Psoas muscle (tissue), 8 donors: ENCODE measurements at regions of chr17 and their contacts with region 1.

Region 1: GRCh38 chr17:47802341-47803022 is 19.1 kb downstream of the OSBPL7 start:
- DNase-seq: no peak
- ATAC-seq: peak; percentile 56 to 64 (median 62)
- H3K4me3 ChIP-seq: no peak overlapping the region
- H3K27ac ChIP-seq: no peak overlapping the region
- H3K4me1 ChIP-seq: peaks cover 16% of the 10 kb centered on the region
- H3K27me3 ChIP-seq: no peaks in the 10 kb centered on the region
- CTCF ChIP-seq: peak; percentile 59

Region 2: GRCh38 chr17:47368262-47368661 is 434.2 kb before region 1 on chr17:
- intact Hi-C with region 1: no loop called
- DNase-seq: no peak
- ATAC-seq: no peak
- H3K4me3 ChIP-seq: no peak overlapping the region
- H3K27ac ChIP-seq: no peak overlapping the region
- H3K4me1 ChIP-seq: no peaks in the 10 kb centered on the region
- H3K27me3 ChIP-seq: no peaks in the 10 kb centered on the region
- CTCF ChIP-seq: no peak

Region 3: DNA sequence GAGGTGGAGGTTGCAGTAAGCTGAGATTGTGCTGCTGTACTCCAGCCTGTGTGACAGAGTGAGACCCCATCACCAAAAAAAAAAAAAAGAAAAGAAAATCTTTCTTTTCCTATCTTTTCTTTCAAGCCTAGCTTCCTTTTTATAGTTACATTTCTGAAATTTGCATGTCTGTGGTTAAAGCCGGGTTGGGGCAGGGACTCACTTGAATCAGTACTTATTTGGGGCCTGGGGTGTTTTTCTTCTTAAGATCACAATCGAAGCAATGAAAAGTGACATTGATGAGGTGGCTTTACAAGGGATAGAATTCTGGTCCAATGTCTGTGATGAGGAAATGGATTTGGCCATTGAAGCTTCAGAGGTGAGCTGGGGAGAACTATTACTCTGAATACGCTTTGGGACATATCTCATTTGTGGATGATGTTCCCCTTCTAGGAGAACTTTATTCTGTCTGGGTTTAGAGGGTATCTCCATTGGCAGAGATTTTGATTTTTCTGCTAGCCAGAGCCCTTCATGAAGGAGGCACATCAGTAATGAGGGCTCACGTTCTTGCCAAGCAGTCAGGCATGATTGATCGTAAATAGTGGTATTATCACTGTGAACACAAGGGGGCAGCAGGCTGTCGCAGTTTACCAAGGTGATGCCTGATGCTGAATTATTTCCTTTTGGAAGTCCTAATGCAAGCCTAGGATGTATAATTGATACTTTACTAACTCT is 138.4 kb before region 1 on chr17:
- intact Hi-C with region 1: loop called (anchors 5 to 10 kb)
- DNase-seq: no peak
- ATAC-seq: peak; percentile 61 to 85 (median 74)
- H3K4me3 ChIP-seq: no peak overlapping the region
- H3K27ac ChIP-seq: no peak overlapping the region
- H3K4me1 ChIP-seq: no peaks in the 10 kb centered on the region
- H3K27me3 ChIP-seq: no peaks in the 10 kb centered on the region
- CTCF ChIP-seq: peak; percentile 72

Region 4: DNA sequence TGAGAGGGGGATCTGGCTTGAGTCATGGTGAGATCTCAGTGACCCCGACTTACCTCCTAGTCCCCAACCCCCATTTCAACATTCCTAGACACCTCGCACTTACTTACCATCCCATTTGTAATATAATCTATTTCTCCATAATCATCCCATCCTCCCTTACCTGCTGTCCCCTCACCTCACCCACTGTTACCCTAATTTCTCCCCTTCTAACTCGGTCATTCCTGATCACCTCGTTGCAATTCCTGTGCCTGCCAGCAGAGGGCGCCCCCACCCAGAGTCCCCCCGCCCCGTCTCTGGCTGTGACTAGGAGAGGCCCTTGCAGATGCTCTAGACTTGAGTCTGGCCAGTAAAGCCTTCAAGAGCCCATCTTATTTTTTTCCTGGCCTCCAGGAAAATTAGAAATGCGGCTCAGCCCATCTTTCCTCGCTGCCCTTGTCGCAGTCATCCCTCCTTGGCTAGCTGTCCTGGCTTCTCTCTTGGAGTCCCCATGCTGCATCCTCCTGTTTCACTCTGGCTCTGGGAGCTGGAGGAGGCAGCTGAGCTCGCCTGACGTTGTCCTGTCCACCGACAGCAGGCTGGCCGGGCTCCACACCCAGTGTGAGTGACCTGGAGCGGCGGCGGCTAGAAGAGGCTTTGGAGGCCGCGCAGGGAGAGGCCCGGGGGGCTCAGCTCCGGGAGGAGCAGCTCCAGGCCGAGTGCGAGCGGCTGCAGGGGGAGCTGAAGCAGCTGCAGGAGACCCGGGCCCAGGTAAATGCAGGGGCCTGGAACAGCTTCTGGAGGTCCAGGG is 103.5 kb before region 1 on chr17:
- intact Hi-C with region 1: loop called (anchors 5 kb)
- DNase-seq: peak; percentile 51 to 78
- ATAC-seq: peak in 3 of 4 donors; percentile 26 to 35 (median 29)
- H3K4me3 ChIP-seq: no peak overlapping the region
- H3K27ac ChIP-seq: no peak overlapping the region
- H3K4me1 ChIP-seq: peaks cover 4% of the 10 kb centered on the region
- H3K27me3 ChIP-seq: no peaks in the 10 kb centered on the region
- CTCF ChIP-seq: peak; percentile 93

Region 5: DNA sequence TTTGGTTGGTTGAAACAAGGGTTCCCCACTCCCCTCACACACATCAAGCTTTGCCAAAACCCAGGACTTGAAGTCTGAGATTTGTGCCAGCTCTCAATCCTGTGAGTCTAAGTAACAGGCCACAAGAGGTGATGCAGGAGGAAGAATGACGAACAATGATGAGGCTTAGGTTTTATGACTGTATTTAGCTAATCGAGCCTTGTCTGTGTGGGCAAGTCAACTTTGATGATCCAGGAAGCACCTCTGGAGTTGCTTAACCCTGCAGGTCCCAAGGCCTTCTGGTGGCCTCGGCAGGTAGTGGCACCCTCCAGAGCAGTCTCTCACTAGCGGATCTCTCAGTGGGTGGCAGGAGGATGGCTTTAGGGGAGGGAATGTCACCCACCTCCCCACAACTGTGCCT is 197.1 kb after region 1 on chr17:
- intact Hi-C with region 1: no loop called
- DNase-seq: no peak
- ATAC-seq: no peak
- H3K4me3 ChIP-seq: no peak overlapping the region
- H3K27ac ChIP-seq: no peak overlapping the region
- H3K4me1 ChIP-seq: peaks cover 8% of the 10 kb centered on the region
- H3K27me3 ChIP-seq: peaks cover 0 to 11% (median 3%) of the 10 kb centered on the region in 3 donors
- CTCF ChIP-seq: no peak